ENCODE measurements at regions of chr9 and their contacts with region 1.

Region 1: GRCh38 chr9:123002754-123003153 is 30.7 kb upstream of the GPR21 start:
- DNase-seq: no peak
- ATAC-seq: peak in 1 of 4 donors; percentile 32
- H3K4me3 ChIP-seq: no peak overlapping the region
- H3K27ac ChIP-seq: peak overlapping the region in 8 of 12 donors; percentile 10 to 61 (median 36)
- H3K4me1 ChIP-seq: peaks cover 0 to 24% (median 11%) of the 10 kb centered on the region in 12 donors
- H3K27me3 ChIP-seq: no peaks in the 10 kb centered on the region
- CTCF ChIP-seq: no peak
- POLR2A ChIP-seq: no peak

Region 2: DNA sequence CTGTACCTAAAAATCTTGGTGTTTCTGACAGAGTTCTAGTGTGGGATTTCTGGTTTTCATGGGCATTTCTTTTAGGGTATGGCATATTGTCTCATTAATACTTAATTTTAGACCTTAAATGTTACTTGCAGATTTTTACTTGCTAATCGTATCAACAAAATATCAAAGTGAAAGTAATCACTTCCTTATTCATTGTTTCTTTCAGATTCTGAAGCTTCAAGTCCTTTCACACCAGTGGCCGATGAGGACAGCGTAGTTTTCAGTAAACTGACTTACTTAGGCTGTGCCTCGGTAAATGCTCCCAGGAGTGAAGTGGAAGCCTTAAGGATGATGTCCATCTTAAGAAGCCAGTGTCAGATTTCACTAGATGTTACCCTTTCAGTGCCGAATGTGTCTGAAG is 16.7 kb before region 1 on chr9:
- intact Hi-C with region 1: loop called in 1 of 10 experiments (anchors 2 kb)
- DNase-seq: no peak
- ATAC-seq: no peak
- H3K4me3 ChIP-seq: no peak overlapping the region
- H3K27ac ChIP-seq: no peak overlapping the region
- H3K4me1 ChIP-seq: no peaks in the 10 kb centered on the region
- H3K27me3 ChIP-seq: no peaks in the 10 kb centered on the region
- CTCF ChIP-seq: no peak
- POLR2A ChIP-seq: no peak

Region 3: DNA sequence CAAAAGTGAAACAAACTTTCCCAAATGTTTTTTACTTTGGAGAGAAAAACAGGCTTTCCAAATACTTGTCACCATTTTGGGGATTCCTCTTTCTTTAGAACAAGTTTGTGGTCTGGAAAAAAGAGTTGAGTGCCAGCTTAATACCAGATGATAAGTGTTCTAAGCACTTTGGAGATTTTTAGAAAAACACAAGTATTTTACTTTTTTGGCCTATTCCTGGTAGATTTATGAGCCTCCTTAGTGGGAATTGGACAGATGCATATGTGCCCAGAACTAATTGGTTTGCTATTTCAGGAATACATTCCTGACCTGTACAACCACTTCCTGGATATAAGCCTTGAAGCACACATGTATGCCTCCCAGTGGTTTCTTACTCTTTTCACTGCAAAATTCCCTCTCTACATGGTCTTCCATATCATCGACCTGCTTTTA is 71.3 kb after region 1 on chr9:
- intact Hi-C with region 1: loop called in 1 of 10 experiments (anchors 5 kb)
- DNase-seq: no peak
- ATAC-seq: peak in 1 of 4 donors; percentile 30
- H3K4me3 ChIP-seq: peak overlapping the region in 1 of 12 donors; percentile 38
- H3K27ac ChIP-seq: peak overlapping the region in 6 of 12 donors; percentile 0 to 50 (median 18)
- H3K4me1 ChIP-seq: peaks cover 0 to 27% (median 12%) of the 10 kb centered on the region in 12 donors
- H3K27me3 ChIP-seq: no peaks in the 10 kb centered on the region
- CTCF ChIP-seq: peak in 1 of 12 donors; percentile 11
- POLR2A ChIP-seq: no peak

Region 4: GRCh38 chr9:123208626-123209174 is 205.9 kb after region 1 on chr9:
- intact Hi-C with region 1: no loop called
- DNase-seq: no peak
- ATAC-seq: peak; percentile 38 to 71 (median 62)
- H3K4me3 ChIP-seq: no peak overlapping the region
- H3K27ac ChIP-seq: no peak overlapping the region
- H3K4me1 ChIP-seq: peaks cover 0 to 7% (median 0%) of the 10 kb centered on the region in 12 donors
- H3K27me3 ChIP-seq: no peaks in the 10 kb centered on the region
- CTCF ChIP-seq: no peak
- POLR2A ChIP-seq: no peak